Testis (tissue), 5 donors: ENCODE measurements at regions of chr4 and their contacts with region 1.

Region 1: DNA sequence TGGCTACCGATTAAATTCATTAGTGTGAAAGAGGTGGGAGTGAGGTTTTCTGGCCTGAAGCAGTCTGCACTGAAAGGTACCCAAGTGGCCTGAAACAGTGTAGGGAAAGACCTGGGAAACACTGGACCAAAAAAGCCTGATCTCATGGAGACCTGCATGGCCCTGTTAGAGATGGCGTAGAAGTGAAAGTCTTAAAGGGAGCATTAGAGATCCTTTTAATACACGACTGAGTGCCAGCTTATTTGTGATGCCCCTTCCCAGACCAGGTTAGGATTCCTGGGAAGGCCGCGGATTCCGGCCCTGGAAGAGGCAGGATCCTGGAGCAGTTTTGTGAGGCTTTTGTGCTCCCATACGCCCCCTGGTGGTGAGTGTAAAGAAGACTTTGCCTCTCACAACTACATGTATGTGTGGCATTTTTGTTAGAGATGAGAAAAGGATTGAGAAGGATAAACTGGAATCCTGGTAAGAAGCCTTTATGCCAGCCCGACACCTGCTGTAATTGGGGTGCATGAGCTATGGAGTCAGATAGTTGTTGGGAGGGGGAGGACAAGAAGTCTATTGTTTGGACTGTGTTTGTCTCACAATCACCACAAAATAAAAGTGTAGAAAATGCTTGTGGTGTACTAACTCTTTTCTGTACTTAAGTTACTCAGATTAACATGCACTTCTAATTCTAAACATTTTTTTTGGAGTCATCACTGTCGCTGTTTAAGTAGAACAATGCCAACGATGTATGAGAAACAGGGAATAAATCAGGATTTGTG is 54.0 kb downstream of the JADE1 start:
- DNase-seq: peak; percentile 75
- H3K4me3 ChIP-seq: no peak overlapping the region
- H3K27ac ChIP-seq: peak overlapping the region in 1 of 2 donors; percentile 29
- H3K4me1 ChIP-seq: peaks cover 8% of the 10 kb centered on the region
- H3K27me3 ChIP-seq: no peaks in the 10 kb centered on the region
- CTCF ChIP-seq: peak; percentile 93 to 96 (median 95)
- POLR2A ChIP-seq: no peak

Region 2: DNA sequence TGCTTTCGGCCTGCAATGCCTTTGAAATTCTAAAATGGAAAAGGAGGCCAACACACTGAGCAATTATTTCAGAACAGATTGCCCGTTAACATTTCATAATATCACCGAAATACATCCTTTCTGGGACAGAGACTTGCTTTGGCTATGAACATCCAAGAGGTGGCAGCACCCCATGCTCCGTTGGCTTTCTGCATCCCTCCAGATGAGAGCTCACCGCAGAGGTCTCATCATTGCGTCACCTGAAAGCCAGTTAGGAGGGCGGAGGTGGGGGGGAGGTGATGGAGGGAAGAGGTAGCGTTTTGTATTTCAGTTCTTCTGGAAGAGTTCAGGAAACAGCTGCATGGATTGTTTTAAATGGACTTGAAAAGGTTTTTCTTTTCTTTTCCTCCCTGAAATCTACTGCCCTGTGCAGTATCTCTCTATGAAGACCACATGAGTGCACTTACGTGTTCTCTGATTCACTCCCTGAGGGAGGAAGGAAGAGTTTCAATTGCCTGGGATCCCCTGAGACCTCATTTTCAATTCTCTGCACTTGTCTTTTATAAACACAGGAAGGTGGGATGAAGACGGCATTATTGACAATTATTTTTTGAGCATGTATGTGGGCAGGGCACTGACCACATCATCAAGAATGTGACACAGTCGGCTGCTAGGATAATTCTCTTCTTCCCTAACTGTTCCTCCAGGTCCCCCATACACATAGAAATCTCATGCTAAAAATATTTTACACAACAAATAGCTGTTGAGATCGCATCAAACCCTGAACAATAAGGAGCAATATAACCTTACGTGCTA is 409.0 kb before region 1 on chr4:
- intact Hi-C with region 1: loop called (anchors 10 kb)
- DNase-seq: peak; percentile 85
- H3K4me3 ChIP-seq: no peak overlapping the region
- H3K27ac ChIP-seq: no peak overlapping the region
- H3K4me1 ChIP-seq: peaks cover 3% of the 10 kb centered on the region
- H3K27me3 ChIP-seq: no peaks in the 10 kb centered on the region
- CTCF ChIP-seq: peak; percentile 51 to 70 (median 67)
- POLR2A ChIP-seq: no peak

Region 3: GRCh38 chr4:128809477-128810330 is 53.8 kb before region 1 on chr4 and contains the start of gene JADE1:
- intact Hi-C with region 1: loop called (anchors 2 kb)
- DNase-seq: peak; percentile 95
- H3K4me3 ChIP-seq: peak within 1 kb of the TSS; percentile 77 to 86
- H3K27ac ChIP-seq: peak within 1 kb of the TSS; percentile 88 to 96
- H3K4me1 ChIP-seq: peaks cover 10% of the 10 kb centered on the region
- H3K27me3 ChIP-seq: no peaks in the 10 kb centered on the region
- CTCF ChIP-seq: peak; percentile 49 to 66 (median 60)
- POLR2A ChIP-seq: no peak
- total RNA-seq, gene JADE1: 28.9 to 32.2 TPM